ENCODE measurements at regions of chr17 and their contacts with region 1.

Region 1: GRCh38 chr17:49473900-49474751 is 21.0 kb upstream of the NGFR start:
- DNase-seq: no peak
- H3K4me3 ChIP-seq: no peak overlapping the region
- H3K27ac ChIP-seq: no peak overlapping the region
- H3K4me1 ChIP-seq: peaks cover 0 to 10% (median 5%) of the 10 kb centered on the region in 4 experiments
- H3K27me3 ChIP-seq: peaks cover 5 to 61% (median 30%) of the 10 kb centered on the region in 5 experiments

Region 2: DNA sequence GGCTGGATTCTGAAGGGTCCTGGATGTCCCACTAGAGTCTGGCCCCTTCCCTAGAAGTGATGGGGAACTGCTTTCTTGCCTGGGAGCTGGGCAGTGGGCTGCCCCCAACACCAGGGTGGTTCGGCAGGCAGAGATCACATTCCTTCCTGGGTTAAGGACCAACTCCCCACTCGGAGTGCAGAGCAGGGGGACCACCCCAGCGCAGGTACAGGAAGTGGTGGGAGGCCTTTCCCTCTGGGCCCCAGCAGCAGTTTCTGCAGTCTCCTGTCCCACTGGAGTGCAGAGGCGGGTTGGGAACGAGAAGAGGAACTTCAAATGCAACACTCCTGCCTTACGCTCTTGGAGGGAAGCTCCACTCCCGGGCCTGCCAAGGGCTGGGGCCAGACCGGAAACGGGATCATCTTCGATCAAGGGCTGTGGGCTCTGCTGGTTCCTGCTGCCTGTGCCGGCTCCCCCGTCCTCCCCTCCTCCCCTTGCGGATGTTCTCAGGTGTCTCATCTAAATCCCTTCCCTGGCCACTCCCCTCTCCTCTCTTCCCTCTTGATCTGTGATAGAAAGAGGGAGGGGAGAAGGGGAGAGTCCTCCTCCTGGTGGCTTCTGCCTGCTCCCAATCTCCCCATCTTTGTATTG is 12.0 kb after region 1 on chr17:
- CTCF ChIA-PET with region 1: interaction called, 10 read pairs
- POLR2A ChIA-PET with region 1: no interaction called
- DNase-seq: peak in 1 of 3 donors; percentile 11
- H3K4me3 ChIP-seq: no peak overlapping the region
- H3K27ac ChIP-seq: no peak overlapping the region
- H3K4me1 ChIP-seq: peaks cover 0 to 25% (median 16%) of the 10 kb centered on the region in 4 experiments
- H3K27me3 ChIP-seq: peaks cover 0 to 32% (median 13%) of the 10 kb centered on the region in 5 experiments

Region 3: DNA sequence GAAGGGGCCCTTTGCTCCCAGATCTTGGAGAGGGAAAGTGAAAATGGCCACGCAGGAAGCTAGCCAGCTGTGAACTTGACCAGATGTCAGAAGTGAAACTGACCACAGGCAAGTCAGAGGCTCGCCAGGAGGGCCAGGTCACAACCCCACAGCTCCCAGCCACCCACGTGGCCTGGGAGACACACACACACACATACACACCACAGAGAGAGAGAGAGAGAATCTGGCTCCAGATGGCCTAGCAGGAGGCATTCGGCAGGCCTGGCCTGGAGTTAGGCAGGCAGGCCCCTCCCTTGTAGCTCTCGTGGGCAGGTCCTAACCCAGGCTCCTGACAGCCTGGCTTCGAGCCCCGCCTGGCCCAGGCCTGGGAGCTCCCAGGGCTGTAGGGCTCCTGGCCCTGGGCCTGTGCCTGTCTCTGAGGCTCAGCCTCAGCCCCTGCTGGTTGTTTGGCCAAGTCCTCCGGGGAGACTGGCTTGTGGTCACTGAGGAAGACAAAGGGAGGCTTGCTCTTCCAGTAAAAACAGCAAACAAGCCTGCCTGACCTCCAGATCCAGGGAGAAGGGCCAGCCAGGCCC is 41.2 kb after region 1 on chr17:
- CTCF ChIA-PET with region 1: no interaction called
- POLR2A ChIA-PET with region 1: no interaction called
- DNase-seq: peak in 2 of 3 donors; percentile 59 to 76
- H3K4me3 ChIP-seq: no peak overlapping the region
- H3K27ac ChIP-seq: no peak overlapping the region
- H3K4me1 ChIP-seq: peaks cover 0 to 41% (median 3%) of the 10 kb centered on the region in 4 experiments
- H3K27me3 ChIP-seq: no peaks in the 10 kb centered on the region